ENCODE measurements at regions of chr12 and their contacts with region 1.

Region 1: GRCh38 chr12:120265473-120266179 is at the start of gene PXN:
- DNase-seq: peak; percentile 28
- ATAC-seq: peak; percentile 95
- H3K4me3 ChIP-seq: peak within 1 kb of the TSS; percentile 63
- H3K27ac ChIP-seq: no peak within 1 kb of the TSS
- H3K4me1 ChIP-seq: 0 out of 2 replicates have a peak, but pooled peaks cover 3% of the 10 kb centered on the region
- H3K27me3 ChIP-seq: peaks cover 1 to 4% of the 10 kb centered on the region in 2 experiments; a peak in 3 of 4 replicates
- CTCF ChIP-seq: peak; percentile 67 to 87 (median 74)
- EP300 ChIP-seq: no peak
- POLR2A ChIP-seq: peak; percentile 78
- RAD21 ChIP-seq: peak; percentile 81
- polyA plus RNA-seq, gene PXN: 2.5 to 2.6 TPM

Region 2: GRCh38 chr12:120234643-120235368 is 30.8 kb before region 1 on chr12:
- CTCF ChIA-PET with region 1: interaction called, 287 read pairs
- POLR2A ChIA-PET with region 1: interaction called, 4 read pairs
- RAD21 ChIA-PET with region 1: interaction called, 170 read pairs
- SMC1A ChIA-PET with region 1: interaction called, 152 read pairs
- in situ Hi-C with region 1: no loop called
- intact Hi-C with region 1: no loop called
- DNase-seq: no peak
- ATAC-seq: peak; percentile 66
- H3K4me3 ChIP-seq: no peak overlapping the region
- H3K27ac ChIP-seq: no peak overlapping the region
- H3K4me1 ChIP-seq: peaks cover 5% of the 10 kb centered on the region; the same call in 1 of the 2 replicates
- H3K27me3 ChIP-seq: no peaks in the 10 kb centered on the region; a peak in 1 of 4 replicates
- CTCF ChIP-seq: peak; percentile 9 to 26 (median 26); a peak in 4 of 6 replicates
- EP300 ChIP-seq: no peak
- POLR2A ChIP-seq: no peak
- RAD21 ChIP-seq: no peak

Region 3: DNA sequence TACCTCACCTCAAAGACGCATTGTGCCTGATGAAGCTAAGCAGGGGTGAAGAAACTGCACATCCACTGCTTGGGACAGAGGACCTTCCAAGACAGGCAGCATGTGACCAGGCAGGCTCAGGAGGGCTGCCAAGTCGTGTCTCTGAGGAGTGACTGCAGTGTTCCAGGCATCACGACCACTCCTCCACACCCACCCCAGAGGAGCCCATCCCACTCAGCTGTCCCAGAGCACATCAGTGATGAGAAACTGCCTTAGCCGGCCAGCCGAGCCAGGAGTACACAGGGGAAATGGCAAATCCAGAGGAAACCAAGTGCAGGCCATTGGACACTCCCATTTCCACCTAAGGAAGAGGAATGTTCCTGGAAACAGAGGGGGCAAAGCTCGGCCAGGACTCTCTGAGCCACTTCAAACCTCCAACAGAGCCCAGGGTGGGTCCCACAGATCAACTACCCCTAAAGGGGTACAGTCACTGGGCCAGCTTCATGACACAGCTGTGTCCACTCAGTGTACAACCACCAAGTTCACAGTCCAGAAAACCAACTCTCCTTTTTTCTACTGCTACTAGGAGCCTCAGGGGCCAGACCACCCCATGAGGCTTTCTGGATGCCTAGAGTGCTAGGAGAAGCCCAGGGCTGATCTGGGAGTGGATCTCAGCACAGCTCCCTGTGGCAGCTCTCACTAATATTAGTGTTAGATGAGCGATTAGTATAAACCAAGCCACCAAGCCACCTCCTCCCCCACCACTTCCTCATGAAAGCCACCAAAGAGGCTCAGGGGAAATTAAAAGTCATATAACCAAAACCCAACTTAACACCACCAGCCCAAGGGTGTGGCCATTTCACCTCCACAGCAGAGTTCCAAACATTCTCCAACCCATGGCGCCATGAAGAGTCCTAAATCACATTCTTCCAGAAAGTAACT is 15.5 kb before region 1 on chr12:
- CTCF ChIA-PET with region 1: interaction called, 6 read pairs
- POLR2A ChIA-PET with region 1: interaction called, 6 read pairs
- RAD21 ChIA-PET with region 1: interaction called, 12 read pairs
- SMC1A ChIA-PET with region 1: interaction called, 5 read pairs
- in situ Hi-C with region 1: no loop called
- intact Hi-C with region 1: no loop called
- DNase-seq: no peak
- ATAC-seq: peak; percentile 75
- H3K4me3 ChIP-seq: no peak overlapping the region
- H3K27ac ChIP-seq: no peak overlapping the region
- H3K4me1 ChIP-seq: peaks cover 35% of the 10 kb centered on the region
- H3K27me3 ChIP-seq: no peaks in the 10 kb centered on the region
- CTCF ChIP-seq: no peak
- EP300 ChIP-seq: no peak
- POLR2A ChIP-seq: no peak
- RAD21 ChIP-seq: no peak

Region 4: GRCh38 chr12:120301962-120302815 is 36.6 kb after region 1 on chr12 and contains the start of gene SIRT4:
- CTCF ChIA-PET with region 1: interaction called, 10 read pairs
- POLR2A ChIA-PET with region 1: no interaction called
- RAD21 ChIA-PET with region 1: no interaction called
- SMC1A ChIA-PET with region 1: no interaction called
- in situ Hi-C with region 1: no loop called
- intact Hi-C with region 1: no loop called
- DNase-seq: peak; percentile 88
- ATAC-seq: peak; percentile 100
- H3K4me3 ChIP-seq: peak within 1 kb of the TSS; percentile 85
- H3K27ac ChIP-seq: peak within 1 kb of the TSS; percentile 20; the same call in 1 of the 2 replicates
- H3K4me1 ChIP-seq: no peaks in the 10 kb centered on the region
- H3K27me3 ChIP-seq: no peaks in the 10 kb centered on the region
- CTCF ChIP-seq: peak; percentile 61 to 90 (median 84)
- EP300 ChIP-seq: no peak
- POLR2A ChIP-seq: no peak
- RAD21 ChIP-seq: peak; percentile 33; the same call in 1 of the 2 replicates
- polyA plus RNA-seq, gene SIRT4: 0.79 to 0.98 TPM